Endothelial cell of umbilical vein (primary cell): ENCODE measurements at regions of chr13 and their contacts with region 1.

Region 1: DNA sequence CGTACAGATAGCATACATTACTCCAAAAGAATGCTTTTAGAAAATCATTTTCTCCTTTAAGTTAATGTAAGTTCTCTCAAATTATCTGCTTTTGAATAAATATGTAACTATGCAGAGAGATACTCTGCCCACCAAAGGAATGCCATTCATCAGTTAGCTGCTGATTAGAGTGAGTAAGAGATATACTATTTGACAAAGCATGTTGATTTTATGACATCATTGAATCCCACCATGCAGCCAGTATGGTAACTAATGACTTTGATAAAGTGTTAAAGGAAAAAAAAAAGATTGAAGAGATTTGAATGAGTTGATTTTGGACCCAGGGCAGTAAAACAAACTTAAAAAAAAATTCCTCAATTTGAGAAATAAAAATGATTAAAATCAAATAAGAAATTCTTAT is 521.5 kb downstream of the SLITRK6 start:
- DNase-seq: peak; percentile 67
- H3K4me3 ChIP-seq: no peak overlapping the region
- H3K27ac ChIP-seq: peak overlapping the region; percentile 32
- H3K4me1 ChIP-seq: peaks cover 2% of the 10 kb centered on the region
- H3K27me3 ChIP-seq: no peaks in the 10 kb centered on the region
- CTCF ChIP-seq: no peak
- POLR2A ChIP-seq: no peak

Region 2: DNA sequence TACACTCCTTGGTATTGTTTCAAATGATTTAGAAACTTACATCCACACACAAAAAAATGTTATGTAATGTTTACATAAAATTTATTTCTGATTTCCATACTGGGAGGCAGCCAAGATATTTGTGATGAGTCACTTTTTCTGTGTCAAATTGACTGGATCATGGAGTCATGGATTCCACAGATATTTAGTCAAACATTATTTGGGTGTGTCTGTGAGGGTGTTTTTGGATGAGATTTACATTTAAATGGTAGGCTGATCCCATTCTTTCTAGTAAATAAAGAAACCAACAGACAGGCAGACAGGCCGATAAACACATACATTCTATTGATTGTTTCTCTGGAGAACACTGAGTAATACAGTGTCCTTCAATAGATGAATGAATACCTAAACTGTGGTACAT is 41.3 kb before region 1 on chr13:
- CTCF ChIA-PET with region 1: no interaction called
- POLR2A ChIA-PET with region 1: no interaction called
- dilution Hi-C with region 1: no loop called
- intact Hi-C with region 1: loop called (anchors 2 kb)
- DNase-seq: peak; percentile 74
- H3K4me3 ChIP-seq: no peak overlapping the region
- H3K27ac ChIP-seq: no peak overlapping the region
- H3K4me1 ChIP-seq: peaks cover 11% of the 10 kb centered on the region
- H3K27me3 ChIP-seq: no peaks in the 10 kb centered on the region
- CTCF ChIP-seq: no peak
- POLR2A ChIP-seq: no peak

Region 3: GRCh38 chr13:85261757-85262346 is 15.9 kb before region 1 on chr13:
- CTCF ChIA-PET with region 1: interaction called, 12 read pairs
- POLR2A ChIA-PET with region 1: no interaction called
- dilution Hi-C with region 1: no loop called
- intact Hi-C with region 1: no loop called
- DNase-seq: peak; percentile 21
- H3K4me3 ChIP-seq: no peak overlapping the region
- H3K27ac ChIP-seq: no peak overlapping the region
- H3K4me1 ChIP-seq: no peaks in the 10 kb centered on the region
- H3K27me3 ChIP-seq: no peaks in the 10 kb centered on the region
- CTCF ChIP-seq: peak in 1 of 2 donors; percentile 43
- POLR2A ChIP-seq: no peak

Region 4: DNA sequence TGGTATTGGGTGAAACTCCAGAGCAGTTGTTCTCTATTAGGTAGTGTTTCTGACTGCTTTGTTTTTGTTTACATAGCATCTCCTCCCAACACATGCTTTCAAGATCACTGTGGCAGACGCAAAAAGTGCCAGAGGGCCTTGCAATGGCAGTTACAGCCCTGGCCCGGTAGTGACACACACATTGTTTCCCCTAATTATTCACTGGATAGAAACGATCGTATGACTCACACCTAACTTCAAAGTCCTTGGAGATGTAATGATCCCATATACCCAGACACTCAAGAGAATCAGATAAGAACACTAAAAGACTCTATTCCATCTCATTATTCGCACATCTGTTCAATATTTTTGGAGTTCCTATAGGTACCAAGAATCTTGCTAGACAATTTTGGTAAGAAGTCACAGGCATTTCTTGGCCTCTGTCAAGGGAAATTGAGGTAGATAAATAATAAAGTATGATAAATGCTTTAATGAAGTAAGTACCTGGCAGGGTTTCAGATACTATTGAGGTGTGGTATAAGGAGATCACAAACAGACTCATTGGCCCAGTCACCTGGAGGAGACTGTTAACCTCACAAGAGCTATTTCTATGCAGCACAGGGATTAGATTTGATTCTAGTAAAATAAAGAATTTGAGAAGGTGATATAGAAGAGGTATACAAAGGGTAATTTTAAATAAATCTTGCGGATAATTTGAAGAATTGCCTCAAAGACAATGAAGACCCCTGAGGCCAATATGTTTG is 36.2 kb after region 1 on chr13:
- CTCF ChIA-PET with region 1: no interaction called
- POLR2A ChIA-PET with region 1: no interaction called
- dilution Hi-C with region 1: no loop called
- intact Hi-C with region 1: loop called (anchors 5 kb)
- DNase-seq: peak; percentile 64
- H3K4me3 ChIP-seq: no peak overlapping the region
- H3K27ac ChIP-seq: no peak overlapping the region
- H3K4me1 ChIP-seq: peaks cover 2% of the 10 kb centered on the region
- H3K27me3 ChIP-seq: no peaks in the 10 kb centered on the region
- CTCF ChIP-seq: no peak
- POLR2A ChIP-seq: no peak